ENCODE measurements at regions of chr5 and their contacts with region 1.

Region 1: GRCh38 chr5:93189707-93190120 is 391.3 kb downstream of the NR2F1-AS1 start:
- DNase-seq: peak; percentile 85
- H3K4me3 Mint-ChIP-seq: no peak overlapping the region
- H3K27ac Mint-ChIP-seq: no peak overlapping the region
- H3K4me1 Mint-ChIP-seq: peaks cover 35% of the 10 kb centered on the region
- H3K27me3 Mint-ChIP-seq: no peaks in the 10 kb centered on the region
- CTCF ChIP-seq: no peak

Region 2: GRCh38 chr5:93236804-93237421 is 47.2 kb after region 1 on chr5:
- CTCF ChIA-PET with region 1: no interaction called
- POLR2A ChIA-PET with region 1: no interaction called
- intact Hi-C with region 1: no loop called
- DNase-seq: peak; percentile 56
- H3K4me3 Mint-ChIP-seq: no peak overlapping the region
- H3K27ac Mint-ChIP-seq: no peak overlapping the region
- H3K4me1 Mint-ChIP-seq: peaks cover 7% of the 10 kb centered on the region
- H3K27me3 Mint-ChIP-seq: no peaks in the 10 kb centered on the region
- CTCF ChIP-seq: no peak

Region 3: DNA sequence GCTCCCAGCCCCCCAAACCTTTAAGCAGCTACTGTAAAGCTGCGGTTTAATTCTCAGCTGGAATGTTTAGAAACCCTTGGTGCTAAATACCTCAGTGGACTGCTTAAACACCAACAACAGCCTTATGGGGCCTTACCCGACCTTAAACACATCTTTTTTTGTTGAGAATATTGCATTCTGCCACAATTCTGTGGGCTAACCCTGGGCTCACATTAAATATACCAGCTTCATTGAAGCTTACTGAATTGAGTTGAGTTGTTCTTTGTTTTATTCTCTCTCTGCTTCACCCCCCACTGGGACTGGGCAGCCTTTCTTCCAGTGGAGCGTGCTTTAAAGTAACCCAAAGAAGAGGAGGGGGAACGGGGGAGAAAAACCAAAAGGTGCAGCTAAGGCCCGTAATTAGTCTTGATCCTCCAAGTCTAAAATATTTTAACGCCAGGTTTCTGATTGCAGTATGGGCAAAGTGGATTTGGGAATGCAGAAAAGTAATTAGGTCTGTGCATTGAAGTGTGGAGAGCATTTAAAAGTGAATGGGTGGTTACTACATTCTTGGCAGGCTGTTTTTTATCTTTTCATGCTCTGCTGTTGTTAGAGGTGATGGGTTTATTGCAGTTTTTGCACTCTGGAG is 110.1 kb after region 1 on chr5:
- CTCF ChIA-PET with region 1: no interaction called
- POLR2A ChIA-PET with region 1: no interaction called
- intact Hi-C with region 1: loop called (anchors 10 kb)
- DNase-seq: no peak
- H3K4me3 Mint-ChIP-seq: no peak overlapping the region
- H3K27ac Mint-ChIP-seq: no peak overlapping the region
- H3K4me1 Mint-ChIP-seq: peaks cover 13% of the 10 kb centered on the region
- H3K27me3 Mint-ChIP-seq: no peaks in the 10 kb centered on the region
- CTCF ChIP-seq: no peak

Region 4: GRCh38 chr5:93349613-93350012 is 159.9 kb after region 1 on chr5:
- CTCF ChIA-PET with region 1: no interaction called
- POLR2A ChIA-PET with region 1: no interaction called
- intact Hi-C with region 1: loop called (anchors 1 kb)
- DNase-seq: peak; percentile 68
- H3K4me3 Mint-ChIP-seq: no peak overlapping the region
- H3K27ac Mint-ChIP-seq: no peak overlapping the region
- H3K4me1 Mint-ChIP-seq: peaks cover 7% of the 10 kb centered on the region
- H3K27me3 Mint-ChIP-seq: no peaks in the 10 kb centered on the region
- CTCF ChIP-seq: no peak

Measured in MCF 10A (cell line).